ENCODE measurements at regions of chr1 and their contacts with region 1.

Region 1: DNA sequence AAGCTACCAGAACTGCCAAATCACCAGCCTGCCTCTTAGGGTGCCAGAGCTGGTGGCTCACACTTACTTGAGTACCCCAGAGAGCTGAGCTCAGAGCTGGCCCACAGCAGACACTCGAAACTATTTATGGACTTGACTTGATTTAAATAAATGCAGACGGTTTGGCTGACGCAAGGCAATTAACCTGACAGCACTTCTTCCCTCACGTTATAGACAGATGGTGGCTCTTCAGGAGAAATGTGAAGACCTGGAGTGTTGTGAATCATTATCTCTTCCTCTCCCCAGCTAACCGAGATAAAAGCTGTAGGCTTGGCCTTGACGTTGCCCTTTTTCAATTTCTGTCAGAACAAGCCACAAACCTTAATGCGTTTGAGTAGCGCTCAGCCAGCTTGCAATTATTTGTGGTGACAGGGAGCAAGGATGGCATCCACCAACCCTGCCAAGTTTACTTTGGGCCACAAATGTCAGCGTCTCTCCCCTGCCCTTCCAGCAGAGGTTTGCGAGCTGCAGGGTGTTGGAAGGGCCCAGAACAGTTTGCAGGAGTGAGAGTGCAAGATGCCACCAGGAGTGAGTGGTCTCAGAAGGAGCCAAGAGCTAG is 34.0 kb upstream of the BCAR3 start:
- DNase-seq: no peak
- H3K4me3 Mint-ChIP-seq: no peak overlapping the region
- H3K27ac Mint-ChIP-seq: peak overlapping the region; percentile 56
- H3K4me1 Mint-ChIP-seq: peaks cover 41% of the 10 kb centered on the region
- H3K27me3 Mint-ChIP-seq: peaks cover 6% of the 10 kb centered on the region

Region 2: DNA sequence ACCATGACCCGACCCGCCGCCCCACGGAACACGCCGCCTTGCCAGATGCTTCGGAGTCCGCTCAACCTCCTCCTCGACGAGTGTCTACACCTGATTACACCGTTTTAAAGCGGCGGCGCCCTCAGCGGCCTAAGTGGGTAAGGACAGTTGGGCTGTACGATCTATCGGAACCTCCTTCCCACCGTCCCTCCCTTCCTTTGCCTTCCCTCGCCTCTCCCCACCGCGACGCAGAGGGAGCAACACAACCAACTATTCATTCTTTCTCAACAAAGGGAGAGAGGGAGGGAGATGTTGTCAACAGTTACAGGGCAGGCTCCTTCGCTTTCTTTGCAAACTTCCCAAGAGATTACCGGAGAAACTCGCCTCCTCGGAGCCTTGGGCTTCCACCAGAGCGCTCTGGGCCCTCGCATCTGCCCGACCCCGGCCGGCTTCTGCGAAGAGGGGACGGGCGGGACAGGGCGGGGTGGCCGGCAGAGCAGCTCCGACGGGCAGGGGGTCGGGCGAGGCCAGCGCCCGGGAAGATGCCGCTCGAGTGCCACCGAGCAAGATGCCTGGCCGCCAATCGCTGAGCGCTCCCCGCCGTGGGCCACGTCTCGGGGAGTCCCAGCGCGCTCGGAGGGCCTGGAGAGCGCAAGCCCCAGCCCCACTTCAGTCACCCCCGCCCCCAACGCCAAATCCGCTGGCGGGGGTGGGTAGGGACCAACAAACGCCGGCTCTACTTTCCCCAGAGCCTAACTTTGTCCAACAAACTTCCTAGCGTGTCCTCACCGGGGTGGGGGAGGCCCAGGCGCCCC is 34.7 kb before region 1 on chr1:
- intact Hi-C with region 1: loop called (anchors 5 kb)
- DNase-seq: peak; percentile 19
- H3K4me3 Mint-ChIP-seq: peak overlapping the region; percentile 84
- H3K27ac Mint-ChIP-seq: no peak overlapping the region
- H3K4me1 Mint-ChIP-seq: peaks cover 12% of the 10 kb centered on the region
- H3K27me3 Mint-ChIP-seq: peaks cover 72% of the 10 kb centered on the region

Region 3: DNA sequence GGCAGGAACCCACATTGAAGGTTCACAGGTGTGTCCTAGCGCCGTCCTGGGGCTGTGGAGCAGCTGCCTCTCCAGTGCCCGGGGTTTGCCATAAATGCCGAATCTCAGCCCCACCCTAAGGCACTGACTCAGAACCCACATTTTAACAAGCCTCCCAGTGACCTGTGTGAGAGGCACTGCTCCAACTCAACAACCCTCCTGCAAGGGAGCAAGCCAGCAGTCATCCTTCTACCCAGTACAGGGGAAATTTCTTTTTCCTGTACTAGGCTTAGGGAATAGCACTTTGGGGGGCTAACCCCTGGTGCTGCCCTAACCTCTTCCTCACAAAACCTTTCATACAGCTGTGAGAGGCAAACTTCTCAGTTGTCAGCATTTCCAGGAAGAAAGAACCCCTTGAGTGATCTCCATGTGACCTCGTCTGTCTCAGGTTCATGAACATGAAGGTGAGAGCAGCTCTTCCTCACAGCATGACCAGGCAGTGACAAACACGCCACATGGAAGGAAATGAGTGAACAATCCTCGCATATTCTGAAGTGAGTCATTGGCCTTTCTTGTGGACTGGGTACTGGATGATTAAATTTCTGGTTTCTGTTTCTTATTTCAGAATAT is 22.5 kb before region 1 on chr1:
- intact Hi-C with region 1: loop called (anchors 1 kb)
- DNase-seq: peak; percentile 26
- H3K4me3 Mint-ChIP-seq: no peak overlapping the region
- H3K27ac Mint-ChIP-seq: peak overlapping the region; percentile 63
- H3K4me1 Mint-ChIP-seq: no peaks in the 10 kb centered on the region
- H3K27me3 Mint-ChIP-seq: peaks cover 13% of the 10 kb centered on the region